ENCODE measurements at regions of chr6 and their contacts with region 1.

Region 1: GRCh38 chr6:35240840-35241801 is 18.4 kb upstream of the ZNF76 start:
- DNase-seq: peak; percentile 82
- ATAC-seq: peak; percentile 42

Region 2: GRCh38 chr6:34986845-34987246 is 254.3 kb before region 1 on chr6:
- intact Hi-C with region 1: loop called (anchors 10 kb)
- DNase-seq: peak; percentile 50
- ATAC-seq: peak; percentile 86

Region 3: DNA sequence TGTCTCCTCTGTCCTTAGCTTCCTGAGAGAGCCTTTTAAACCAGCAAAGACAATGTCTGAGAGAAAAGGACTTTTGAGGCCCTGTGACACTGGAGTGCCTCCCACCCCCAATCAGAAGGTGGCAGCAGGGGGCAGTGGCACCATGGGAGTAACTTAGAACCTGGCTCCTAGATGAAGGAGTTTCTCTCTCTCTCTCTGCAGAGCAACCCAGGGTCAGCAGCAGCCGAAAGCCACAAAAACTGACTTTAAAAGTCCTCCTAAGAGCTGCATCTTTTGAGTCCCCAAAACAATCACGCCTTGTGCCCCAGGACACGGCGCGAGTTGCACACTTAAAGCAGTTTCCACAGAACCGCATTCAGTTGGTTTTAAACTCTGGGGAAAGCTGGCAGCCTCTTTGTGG is 94.7 kb before region 1 on chr6:
- intact Hi-C with region 1: loop called (anchors 2 kb)
- DNase-seq: peak; percentile 64
- ATAC-seq: peak; percentile 93

Region 4: DNA sequence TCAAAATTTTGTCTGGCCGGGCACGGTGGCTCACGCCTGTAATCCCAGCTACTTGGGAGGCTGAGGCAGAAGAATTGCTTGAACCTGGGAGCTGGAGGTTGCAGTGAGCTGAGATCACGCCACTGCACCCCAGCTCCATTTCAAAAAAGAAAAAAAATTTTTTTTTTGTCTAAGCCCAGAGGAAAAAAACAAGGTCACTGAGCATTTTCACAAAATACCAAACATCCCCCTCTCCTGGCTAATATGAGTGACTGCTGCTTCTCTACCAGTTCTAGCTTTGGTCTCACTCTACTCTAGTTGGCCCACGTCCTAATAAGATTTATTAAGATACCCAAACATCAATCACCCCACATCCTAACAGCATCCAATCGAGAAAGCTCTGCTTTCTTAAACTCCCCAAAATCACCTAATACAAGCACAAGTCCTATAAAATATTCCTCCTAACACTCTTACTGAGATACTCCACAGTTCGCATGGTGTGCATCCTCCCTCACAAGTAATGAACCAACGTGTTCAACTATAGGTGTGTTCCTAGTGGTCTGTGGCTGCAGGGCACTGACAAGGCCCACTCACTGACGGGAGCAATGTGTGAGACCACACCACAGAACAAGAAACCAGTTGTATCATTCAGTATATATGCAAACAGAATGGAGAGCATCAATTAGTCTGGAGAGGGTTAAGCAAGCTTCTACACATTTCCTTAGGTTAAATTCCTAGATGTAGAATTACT is 383.4 kb after region 1 on chr6:
- intact Hi-C with region 1: no loop called
- DNase-seq: no peak
- ATAC-seq: peak; percentile 33

Measured in Right ventricle myocardium superior (tissue), 1 donor.